BJ (cell line): ENCODE measurements at regions of chr2 and their contacts with region 1.

Region 1: DNA sequence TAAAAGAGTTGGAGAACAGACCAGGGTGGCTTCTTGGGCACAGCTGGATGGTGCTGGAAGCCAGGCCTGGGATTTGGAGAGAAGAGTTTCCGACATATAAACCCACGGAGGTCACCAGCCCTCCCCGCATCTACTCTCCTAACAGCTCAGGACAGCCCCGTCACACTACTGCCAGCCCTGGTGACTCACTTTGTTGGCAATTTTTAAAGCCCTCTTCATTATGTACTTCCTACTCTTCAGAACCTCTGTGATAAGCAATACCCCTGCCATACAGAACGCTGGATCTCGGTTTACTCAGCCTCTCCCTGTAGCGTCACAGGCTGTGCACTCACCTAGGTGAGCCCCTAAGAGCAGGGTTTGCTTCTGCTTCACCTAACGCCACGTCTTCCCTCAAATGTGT is 48.1 kb downstream of the ID2 start:
- DNase-seq: no peak
- H3K4me3 ChIP-seq: no peak overlapping the region
- H3K27me3 ChIP-seq: no peaks in the 10 kb centered on the region
- CTCF ChIP-seq: no peak

Region 2: DNA sequence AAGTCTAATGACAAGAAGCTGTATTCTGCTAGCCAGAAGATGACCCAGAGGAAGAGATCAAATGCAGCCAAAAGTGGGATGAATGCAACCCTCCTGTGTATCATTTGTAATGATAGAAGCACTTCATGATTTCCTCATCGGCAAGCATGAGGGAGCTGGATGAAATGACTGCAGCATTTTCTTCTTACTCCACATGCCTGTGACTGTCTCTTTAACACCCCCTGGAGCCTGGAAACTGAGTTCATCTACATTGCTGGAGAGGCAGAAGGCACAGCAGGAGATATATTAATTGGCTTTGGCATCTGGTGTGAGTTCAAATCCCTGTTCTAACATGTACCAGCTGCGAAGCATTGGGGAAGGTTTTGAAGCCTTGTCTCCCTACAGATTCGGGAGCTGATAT is 10.4 kb before region 1 on chr2:
- CTCF ChIA-PET with region 1: interaction called, 11 read pairs
- POLR2A ChIA-PET with region 1: no interaction called
- DNase-seq: no peak
- H3K4me3 ChIP-seq: no peak overlapping the region
- H3K27me3 ChIP-seq: no peaks in the 10 kb centered on the region
- CTCF ChIP-seq: no peak

Region 3: DNA sequence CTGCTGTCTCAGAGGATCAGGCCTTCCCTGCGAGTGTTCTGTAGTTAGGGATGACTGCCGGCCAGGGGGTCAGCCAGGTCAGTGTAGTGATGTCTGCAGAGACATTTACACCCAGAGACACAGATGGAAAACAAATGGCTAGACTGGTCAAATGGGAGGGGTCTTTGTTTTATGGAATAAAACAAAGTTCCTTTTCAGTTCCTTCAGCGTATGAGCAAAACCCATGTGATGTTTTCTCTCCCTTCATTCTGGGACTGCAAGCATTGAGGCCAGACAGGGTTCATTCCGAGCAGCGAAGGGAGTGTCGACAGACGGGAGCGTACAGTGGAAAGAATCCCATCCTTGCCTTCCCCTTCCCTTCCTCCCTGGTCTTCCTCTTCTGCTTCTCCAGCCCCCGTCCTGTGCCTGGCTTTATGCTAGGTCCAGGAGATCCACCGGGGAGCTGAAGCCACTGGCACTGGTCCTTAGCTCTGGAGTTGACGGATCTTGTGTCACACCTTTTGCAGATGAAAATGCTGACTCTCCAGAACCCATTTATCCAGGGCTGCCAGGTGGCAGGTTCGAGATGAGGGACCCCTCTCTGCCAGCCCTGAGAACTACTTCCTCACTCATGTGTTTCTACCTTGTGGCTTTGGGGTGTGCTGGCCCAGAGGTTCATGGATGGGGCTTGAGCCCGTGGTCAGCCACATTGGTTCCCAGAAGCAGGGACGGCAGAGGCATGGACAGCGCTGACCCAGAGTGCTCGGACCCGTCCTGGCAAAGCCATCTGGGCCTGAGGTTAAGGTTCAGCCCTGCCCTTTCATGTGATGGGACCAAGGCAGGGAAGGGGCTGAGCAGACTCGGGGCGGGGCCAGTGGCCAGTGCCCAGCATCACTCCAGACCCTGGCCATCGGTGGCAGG is 669.2 kb after region 1 on chr2:
- CTCF ChIA-PET with region 1: no interaction called
- POLR2A ChIA-PET with region 1: no interaction called
- DNase-seq: no peak
- H3K4me3 ChIP-seq: no peak overlapping the region
- H3K27me3 ChIP-seq: no peaks in the 10 kb centered on the region
- CTCF ChIP-seq: no peak